ENCODE measurements at regions of chr1 and their contacts with region 1.

Region 1: GRCh38 chr1:9101510-9102146 is 27.3 kb downstream of the GPR157 start:
- DNase-seq: no peak
- ATAC-seq: no peak
- H3K4me3 ChIP-seq: no peak overlapping the region
- H3K27ac ChIP-seq: no peak overlapping the region
- H3K4me1 ChIP-seq: no peaks in the 10 kb centered on the region
- H3K27me3 ChIP-seq: no peaks in the 10 kb centered on the region

Region 2: DNA sequence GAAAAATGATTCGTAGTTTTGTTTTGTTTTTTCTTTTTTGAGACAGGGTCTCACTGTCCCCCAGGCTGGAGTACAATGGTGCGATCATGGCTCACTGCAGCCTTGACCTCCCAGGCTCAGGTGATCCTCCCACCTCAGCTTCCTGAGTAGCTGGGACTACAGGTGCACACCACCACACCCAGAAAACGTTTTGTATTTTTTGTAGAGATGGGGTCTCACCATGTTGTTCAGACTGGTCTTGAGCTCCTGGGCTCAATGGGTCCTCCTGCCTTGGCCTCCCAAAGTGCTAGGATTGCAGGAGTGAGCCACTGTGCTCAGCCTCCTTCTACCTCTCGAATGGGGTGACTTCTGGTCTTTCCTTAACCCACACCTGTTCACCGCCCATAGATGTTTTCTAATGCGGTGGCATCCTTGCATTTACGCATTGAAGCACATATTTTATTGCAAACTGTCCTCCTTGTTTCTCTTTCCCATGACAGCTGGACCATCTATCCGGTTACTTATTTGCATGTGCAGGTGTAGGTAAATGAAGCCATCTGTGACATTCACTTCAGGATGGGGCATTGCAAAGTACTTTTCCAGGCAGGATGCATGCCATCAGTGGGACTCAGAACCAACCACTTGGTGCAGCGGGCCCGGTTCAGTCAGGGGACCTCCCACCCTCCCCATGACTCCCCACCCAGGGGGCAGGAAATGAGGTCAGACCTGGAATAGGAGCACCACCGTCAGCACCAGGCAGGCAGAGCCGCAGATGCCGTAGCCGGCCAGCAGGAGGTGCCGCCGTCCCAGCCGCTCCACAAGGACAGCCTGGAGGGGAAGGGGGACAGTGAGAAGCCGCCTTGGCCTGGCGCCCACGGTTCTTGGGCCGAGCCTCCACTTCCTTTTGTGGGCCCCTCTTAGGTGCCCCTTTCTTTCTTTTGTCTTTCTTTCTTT is 91.9 kb before region 1 on chr1:
- intact Hi-C with region 1: loop called in 1 of 2 experiments (anchors 2 kb)
- DNase-seq: no peak
- ATAC-seq: no peak
- H3K4me3 ChIP-seq: no peak overlapping the region
- H3K27ac ChIP-seq: no peak overlapping the region
- H3K4me1 ChIP-seq: no peaks in the 10 kb centered on the region
- H3K27me3 ChIP-seq: no peaks in the 10 kb centered on the region

Measured in aorta (tissue), 5 donors.